ENCODE measurements at regions of chr4 and their contacts with region 1.

Region 1: DNA sequence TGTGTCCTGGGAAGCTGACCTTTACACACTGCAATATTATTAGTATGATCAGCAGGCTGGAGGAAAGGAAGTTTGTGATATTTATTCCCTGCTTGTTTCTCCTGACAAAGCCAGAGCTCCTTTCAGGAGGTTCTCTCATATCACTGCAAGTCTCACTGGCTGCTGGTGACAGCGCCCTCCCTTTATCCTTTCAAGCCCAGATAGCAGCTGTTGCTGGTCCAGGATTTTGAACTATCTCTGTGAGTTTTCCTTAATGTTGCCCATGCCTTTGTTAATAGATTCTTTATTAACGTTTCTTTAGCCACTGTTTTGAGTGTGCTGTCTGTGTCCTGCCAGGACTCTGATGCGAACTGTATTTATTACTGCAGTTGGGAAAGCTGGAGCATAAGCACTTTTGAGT is 518.7 kb downstream of the C4orf33 start:
- DNase-seq: no peak
- H3K4me3 ChIP-seq: no peak overlapping the region
- H3K27ac ChIP-seq: no peak overlapping the region
- H3K4me1 ChIP-seq: no peaks in the 10 kb centered on the region
- H3K27me3 ChIP-seq: no peaks in the 10 kb centered on the region
- CTCF ChIP-seq: no peak

Region 2: GRCh38 chr4:129532573-129532972 is 82.0 kb before region 1 on chr4:
- CTCF ChIA-PET with region 1: no interaction called
- dilution Hi-C with region 1: loop called (anchors 5 kb)
- in situ Hi-C with region 1: no loop called
- intact Hi-C with region 1: no loop called
- DNase-seq: no peak
- H3K4me3 ChIP-seq: no peak overlapping the region
- H3K27ac ChIP-seq: no peak overlapping the region
- H3K4me1 ChIP-seq: no peaks in the 10 kb centered on the region
- H3K27me3 ChIP-seq: peaks cover 2% of the 10 kb centered on the region
- CTCF ChIP-seq: no peak

Measured in mammary epithelial cell (primary cell).